Prostate gland (tissue), 2 donors: ENCODE measurements at regions of chr19 and their contacts with region 1.

Region 1: DNA sequence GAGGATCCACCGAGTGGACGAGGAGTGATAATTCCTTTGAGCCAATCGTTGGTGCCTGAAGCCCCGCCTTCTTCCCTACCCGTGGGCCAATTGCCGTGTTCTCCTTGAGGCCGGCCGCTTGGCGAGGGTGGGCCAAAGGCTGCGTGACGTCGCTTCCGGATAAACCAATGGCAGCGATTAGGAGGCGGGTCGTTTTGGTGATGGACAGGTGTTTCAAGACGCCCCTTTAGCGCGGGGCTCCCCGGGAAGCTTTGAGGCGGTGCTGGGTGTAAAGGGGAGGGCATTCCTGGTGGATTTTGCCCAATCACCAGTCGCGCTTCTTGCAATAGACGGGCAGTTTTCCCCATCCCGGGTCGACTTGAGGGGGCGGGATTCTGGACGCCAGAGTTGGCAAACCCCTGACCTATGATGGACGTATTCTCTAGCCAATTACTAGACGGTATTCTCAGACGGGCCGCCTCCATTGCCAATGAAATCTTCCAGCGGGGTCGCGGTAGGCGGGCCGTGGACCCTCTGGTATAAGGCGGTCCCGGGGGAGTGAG is 310 bp upstream of the PRMT1 start:
- DNase-seq: peak; percentile 100
- H3K4me3 ChIP-seq: peak overlapping the region; percentile 66 to 92
- H3K27ac ChIP-seq: peak overlapping the region; percentile 83 to 93
- H3K4me1 ChIP-seq: peaks cover 11% of the 10 kb centered on the region
- H3K27me3 ChIP-seq: no peaks in the 10 kb centered on the region
- CTCF ChIP-seq: no peak
- POLR2A ChIP-seq: no peak

Region 2: DNA sequence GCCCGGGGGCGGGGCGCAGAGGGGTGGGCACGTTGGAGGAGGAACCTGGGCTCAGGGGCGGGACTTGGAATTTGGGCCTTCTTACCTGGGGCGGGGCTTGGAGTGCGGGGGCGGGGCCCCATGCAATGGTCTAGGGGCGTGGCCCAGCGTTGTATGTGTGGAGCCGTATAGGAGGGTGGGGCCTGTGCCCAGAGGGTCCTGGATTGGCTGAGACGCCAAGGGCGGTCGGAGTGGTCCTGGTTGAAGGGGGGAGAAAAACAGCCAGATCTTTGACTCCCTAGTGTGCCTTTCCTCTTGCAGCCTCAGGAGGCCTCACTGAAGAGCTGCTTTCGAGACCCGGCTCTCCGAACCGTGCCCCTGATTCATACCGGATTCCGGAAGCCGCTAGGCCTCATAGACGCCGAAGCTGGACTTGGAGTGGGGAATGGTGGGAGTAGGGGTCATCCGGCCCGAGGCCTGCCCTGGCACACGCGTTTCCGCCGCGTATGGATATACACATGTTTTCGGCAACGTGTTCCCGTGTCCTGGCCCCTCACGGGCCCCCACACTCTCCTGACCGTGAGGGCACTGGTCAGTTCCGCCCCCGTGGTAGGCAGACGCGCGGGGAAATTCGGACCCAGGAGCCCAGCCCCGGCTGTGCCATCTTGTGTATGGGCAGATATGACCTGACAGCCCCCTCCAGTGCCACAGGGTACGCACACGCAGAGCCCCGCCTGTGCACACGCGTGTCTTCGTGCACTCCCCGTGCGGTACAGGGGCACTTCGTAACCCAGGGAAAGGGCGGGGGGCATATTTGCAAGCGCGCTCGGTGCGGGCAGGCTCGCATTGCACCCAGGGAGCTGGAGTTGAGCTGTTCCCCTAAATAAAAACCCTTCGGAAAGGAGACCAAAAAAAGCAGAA is 86.4 kb before region 1 on chr19:
- intact Hi-C with region 1: loop called (anchors 5 kb)
- DNase-seq: peak; percentile 98
- H3K4me3 ChIP-seq: peak overlapping the region; percentile 87 to 89
- H3K27ac ChIP-seq: peak overlapping the region; percentile 91 to 93
- H3K4me1 ChIP-seq: peaks cover 3% of the 10 kb centered on the region
- H3K27me3 ChIP-seq: no peaks in the 10 kb centered on the region
- CTCF ChIP-seq: peak in 1 of 4 experiments; percentile 21
- POLR2A ChIP-seq: peak; percentile 75

Region 3: DNA sequence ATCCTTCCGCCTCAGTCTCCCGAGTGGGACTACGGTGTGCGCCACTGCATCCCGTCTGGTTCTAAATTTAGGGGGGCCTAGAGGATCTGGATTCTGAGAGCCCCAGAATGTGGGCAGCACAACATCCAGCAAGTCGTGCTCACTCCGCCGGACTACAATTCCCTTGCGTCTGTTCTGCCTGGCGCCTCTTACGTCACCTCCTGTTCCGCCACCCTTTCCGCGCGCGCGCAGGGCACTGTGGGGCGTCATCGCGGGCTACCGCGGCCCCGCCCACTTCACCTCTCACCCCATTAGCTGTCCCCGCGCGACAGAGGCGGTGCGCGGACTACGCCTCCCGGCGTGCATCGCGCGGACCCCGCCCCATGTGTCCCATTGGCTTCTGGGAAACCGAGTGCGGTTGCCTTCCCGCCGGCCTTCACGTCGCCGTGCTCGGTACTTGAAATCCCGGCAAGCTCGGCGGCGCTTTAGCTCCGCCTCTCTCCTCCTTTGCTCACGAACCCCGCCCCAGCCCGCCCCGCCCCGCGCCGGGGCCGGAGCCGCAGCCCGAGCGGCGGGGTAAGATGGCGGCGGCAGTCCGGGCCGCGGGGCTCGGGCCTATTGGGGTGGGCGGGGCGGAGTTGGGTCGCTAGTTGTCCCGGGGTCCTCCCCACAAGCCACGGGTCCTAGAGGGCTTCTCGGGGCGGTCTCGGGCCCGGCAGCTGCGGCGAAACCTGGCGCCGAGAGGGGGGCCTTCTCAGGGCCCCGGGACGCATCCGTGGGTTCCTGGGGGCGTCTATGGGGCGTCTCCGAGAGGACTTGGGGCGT is 34.9 kb before region 1 on chr19 and contains the start of gene SCAF1:
- intact Hi-C with region 1: loop called (anchors 2 kb)
- DNase-seq: peak; percentile 99
- H3K4me3 ChIP-seq: peak within 1 kb of the TSS; percentile 95 to 96
- H3K27ac ChIP-seq: peak within 1 kb of the TSS; percentile 97 to 98
- H3K4me1 ChIP-seq: peaks cover 22% of the 10 kb centered on the region
- H3K27me3 ChIP-seq: no peaks in the 10 kb centered on the region
- CTCF ChIP-seq: peak in 2 of 4 experiments; percentile 13 to 25
- POLR2A ChIP-seq: peak; percentile 96
- total RNA-seq, gene SCAF1: 47.9 to 80.8 TPM

Region 4: DNA sequence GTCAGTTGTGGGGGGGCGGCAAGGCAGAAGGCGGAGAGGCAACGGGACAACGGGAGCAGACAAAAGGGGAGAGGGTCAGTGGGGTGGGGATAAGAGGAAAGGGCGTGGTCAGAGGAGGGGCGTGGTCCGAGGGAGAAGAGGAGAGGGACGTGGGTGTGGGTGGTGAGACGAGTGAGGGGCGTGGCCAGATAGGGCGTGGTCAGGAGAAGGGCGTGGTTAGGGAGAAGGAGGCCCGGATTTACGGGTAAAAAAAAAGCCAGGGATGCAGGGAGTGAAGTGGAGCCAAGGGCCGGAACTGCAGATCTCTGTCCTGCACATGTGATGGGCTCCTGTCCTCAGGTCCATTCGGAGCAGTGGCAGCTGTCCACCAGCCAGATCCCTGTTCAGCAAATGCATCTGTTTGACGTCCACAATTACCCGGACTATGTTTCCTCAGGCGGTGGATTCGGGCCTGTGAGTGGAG is 35.7 kb after region 1 on chr19:
- intact Hi-C with region 1: no loop called
- DNase-seq: no peak
- H3K4me3 ChIP-seq: no peak overlapping the region
- H3K27ac ChIP-seq: no peak overlapping the region
- H3K4me1 ChIP-seq: no peaks in the 10 kb centered on the region
- H3K27me3 ChIP-seq: no peaks in the 10 kb centered on the region
- CTCF ChIP-seq: no peak
- POLR2A ChIP-seq: no peak

Region 5: DNA sequence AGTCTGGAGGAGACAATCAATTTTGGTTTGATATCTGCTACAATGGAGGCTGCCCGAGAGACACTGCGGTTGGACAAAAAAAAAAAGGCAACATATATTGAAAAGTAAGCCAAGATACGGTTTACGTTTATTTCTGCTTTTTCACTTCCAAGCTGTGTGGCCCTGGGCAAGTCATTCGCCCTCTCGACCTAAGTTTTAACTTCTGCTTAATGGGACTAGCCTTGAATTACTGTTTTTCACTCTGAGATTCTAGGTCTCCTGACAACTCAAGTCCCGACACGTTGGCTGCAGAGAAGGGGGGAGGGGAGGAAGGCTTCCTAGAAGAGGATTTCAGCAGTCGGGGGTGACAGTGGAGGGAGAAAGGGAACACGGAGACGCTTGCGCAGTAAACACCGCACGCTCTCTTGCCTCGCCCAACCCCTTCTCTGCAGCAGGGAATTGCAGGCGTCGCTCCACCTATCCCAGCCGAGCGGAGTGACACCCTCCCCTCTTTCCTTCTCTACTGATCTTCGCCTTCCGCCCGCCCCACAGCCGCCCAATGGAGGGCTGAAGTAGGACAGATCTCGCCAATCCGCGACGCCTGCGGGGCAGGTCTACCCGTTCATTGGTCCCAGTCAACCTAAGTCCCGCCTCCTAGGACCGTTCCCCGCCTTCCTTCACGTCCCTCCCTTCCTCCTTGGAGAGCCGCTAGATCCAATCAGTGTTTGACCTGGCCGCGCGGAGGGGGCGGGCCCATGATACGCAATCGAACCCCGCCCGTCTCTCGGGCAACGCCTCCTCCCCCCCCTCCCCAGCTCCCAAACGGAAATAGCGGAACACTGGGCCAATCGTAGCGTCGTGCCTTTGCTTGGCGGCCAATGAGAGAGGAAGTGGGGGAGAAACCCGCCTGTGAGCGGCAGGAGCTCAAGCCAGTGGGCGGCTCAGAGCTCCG is 89.5 kb after region 1 on chr19:
- intact Hi-C with region 1: loop called (anchors 5 kb)
- DNase-seq: peak; percentile 99
- H3K4me3 ChIP-seq: peak overlapping the region; percentile 82 to 94
- H3K27ac ChIP-seq: peak overlapping the region; percentile 82 to 86
- H3K4me1 ChIP-seq: peaks cover 10% of the 10 kb centered on the region
- H3K27me3 ChIP-seq: no peaks in the 10 kb centered on the region
- CTCF ChIP-seq: peak in 2 of 4 experiments; percentile 36 to 49
- POLR2A ChIP-seq: peak; percentile 85